Left ventricle myocardium inferior (tissue), 1 donor: ENCODE measurements at regions of chr18 and their contacts with region 1.

Region 1: GRCh38 chr18:35231052-35231451 is 9.8 kb upstream of the ZNF397 start:
- DNase-seq: peak; percentile 72
- H3K4me3 ChIP-seq: peak overlapping the region; percentile 28
- H3K27ac ChIP-seq: no peak overlapping the region
- H3K4me1 ChIP-seq: no peaks in the 10 kb centered on the region
- H3K27me3 ChIP-seq: no peaks in the 10 kb centered on the region
- CTCF ChIP-seq: peak; percentile 98

Region 2: GRCh38 chr18:35290073-35290735 is 59.2 kb after region 1 on chr18 and contains the start of gene ZSCAN30:
- intact Hi-C with region 1: no loop called
- DNase-seq: peak; percentile 96
- H3K4me3 ChIP-seq: peak within 1 kb of the TSS; percentile 84
- H3K27ac ChIP-seq: peak within 1 kb of the TSS; percentile 87
- H3K4me1 ChIP-seq: peaks cover 54% of the 10 kb centered on the region
- H3K27me3 ChIP-seq: no peaks in the 10 kb centered on the region
- CTCF ChIP-seq: no peak
- total RNA-seq, gene ZSCAN30: 13.3 TPM

Region 3: GRCh38 chr18:35355140-35355618 is 124.1 kb after region 1 on chr18:
- intact Hi-C with region 1: loop called (anchors 2 kb)
- DNase-seq: peak; percentile 58
- H3K4me3 ChIP-seq: peak overlapping the region; percentile 52
- H3K27ac ChIP-seq: no peak overlapping the region
- H3K4me1 ChIP-seq: no peaks in the 10 kb centered on the region
- H3K27me3 ChIP-seq: no peaks in the 10 kb centered on the region
- CTCF ChIP-seq: peak; percentile 82

Region 4: DNA sequence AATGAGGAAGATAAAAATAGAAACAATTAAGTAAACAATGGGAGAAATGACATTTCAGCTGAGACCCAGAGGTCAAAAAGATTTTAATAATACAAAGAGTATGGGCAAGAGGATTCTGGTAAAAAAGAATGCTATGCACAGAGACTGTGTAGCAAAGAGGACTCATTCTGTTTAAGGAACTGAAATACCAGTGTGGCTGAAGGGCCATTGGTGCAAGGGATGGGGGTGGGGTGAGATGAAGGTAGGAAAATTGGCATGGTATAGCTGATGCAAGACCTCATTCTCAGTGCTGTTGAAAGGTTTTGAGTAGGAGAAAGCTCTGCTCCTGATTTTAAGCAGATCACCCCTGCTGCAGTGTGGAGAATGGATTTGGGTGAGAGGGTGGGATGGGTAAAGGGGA is 361.2 kb after region 1 on chr18:
- intact Hi-C with region 1: no loop called
- DNase-seq: no peak
- H3K4me3 ChIP-seq: no peak overlapping the region
- H3K27ac ChIP-seq: no peak overlapping the region
- H3K4me1 ChIP-seq: peaks cover 22% of the 10 kb centered on the region
- H3K27me3 ChIP-seq: no peaks in the 10 kb centered on the region
- CTCF ChIP-seq: no peak